ENCODE measurements at regions of chr14 and their contacts with region 1.

Region 1: DNA sequence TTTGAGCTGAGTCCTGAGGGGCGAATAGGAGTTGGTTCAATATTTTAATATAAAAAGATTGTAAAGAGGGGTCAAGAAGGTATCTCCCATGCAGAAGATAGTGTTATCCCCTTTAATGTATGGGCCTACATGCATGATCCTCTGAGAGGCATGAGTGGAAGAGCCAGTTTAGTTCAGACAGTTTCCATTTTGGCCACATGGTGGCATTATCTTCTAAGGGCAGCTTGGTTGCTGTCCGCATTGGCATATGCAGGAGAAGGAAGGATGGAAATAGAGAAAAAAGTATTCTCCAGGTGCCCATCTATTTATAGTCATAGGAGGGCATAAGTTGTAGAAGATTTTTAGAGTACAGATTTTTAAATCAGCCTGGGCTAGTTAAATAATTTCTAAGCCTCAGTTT is 5.4 kb downstream of the SAMD4A start:
- DNase-seq: peak in 3 of 4 experiments; percentile 29 to 46 (median 41)
- ATAC-seq: 0 out of 3 replicates have a peak, but pooled peaks have one; percentile 11
- H3K4me3 ChIP-seq: no peak overlapping the region
- H3K27ac ChIP-seq: no peak overlapping the region
- H3K4me1 ChIP-seq: peaks cover 12 to 13% of the 10 kb centered on the region in 2 experiments; a peak in 4 of 5 replicates
- H3K27me3 ChIP-seq: no peaks in the 10 kb centered on the region
- CTCF ChIP-seq: peak; percentile 57 to 60 (median 57); a peak in 5 of 6 replicates
- EP300 ChIP-seq: no peak
- POLR2A ChIP-seq: no peak
- RAD21 ChIP-seq: peak; percentile 17 to 68; a peak in 3 of 4 replicates

Region 2: DNA sequence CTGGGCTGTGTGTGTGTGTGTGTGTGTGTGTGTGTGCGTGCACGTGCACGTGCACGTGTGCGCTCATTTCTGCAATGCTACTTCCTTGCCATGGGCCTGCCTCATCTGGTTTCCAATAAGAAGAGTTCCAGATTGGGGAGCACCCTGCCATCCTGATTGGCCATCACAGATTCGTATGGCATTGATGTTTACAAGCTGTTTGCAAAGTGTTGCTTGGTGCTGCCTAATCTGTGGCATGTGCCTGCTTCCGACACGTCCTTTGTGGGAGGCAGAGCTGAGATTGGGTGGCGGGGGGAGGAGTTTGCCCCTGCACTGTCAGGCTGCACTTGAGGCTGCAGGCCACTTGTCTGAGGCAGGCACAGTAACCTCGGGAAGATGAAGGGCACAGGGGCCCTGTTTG is 33.9 kb after region 1 on chr14:
- CTCF ChIA-PET with region 1: no interaction called
- POLR2A ChIA-PET with region 1: no interaction called
- in situ Hi-C with region 1: no loop called
- intact Hi-C with region 1: no loop called
- DNase-seq: no peak
- ATAC-seq: no peak
- H3K4me3 ChIP-seq: no peak overlapping the region
- H3K27ac ChIP-seq: no peak overlapping the region
- H3K4me1 ChIP-seq: no peaks in the 10 kb centered on the region; a peak in 1 of 5 replicates
- H3K27me3 ChIP-seq: no peaks in the 10 kb centered on the region
- CTCF ChIP-seq: no peak
- EP300 ChIP-seq: no peak
- POLR2A ChIP-seq: no peak
- RAD21 ChIP-seq: no peak

Region 3: DNA sequence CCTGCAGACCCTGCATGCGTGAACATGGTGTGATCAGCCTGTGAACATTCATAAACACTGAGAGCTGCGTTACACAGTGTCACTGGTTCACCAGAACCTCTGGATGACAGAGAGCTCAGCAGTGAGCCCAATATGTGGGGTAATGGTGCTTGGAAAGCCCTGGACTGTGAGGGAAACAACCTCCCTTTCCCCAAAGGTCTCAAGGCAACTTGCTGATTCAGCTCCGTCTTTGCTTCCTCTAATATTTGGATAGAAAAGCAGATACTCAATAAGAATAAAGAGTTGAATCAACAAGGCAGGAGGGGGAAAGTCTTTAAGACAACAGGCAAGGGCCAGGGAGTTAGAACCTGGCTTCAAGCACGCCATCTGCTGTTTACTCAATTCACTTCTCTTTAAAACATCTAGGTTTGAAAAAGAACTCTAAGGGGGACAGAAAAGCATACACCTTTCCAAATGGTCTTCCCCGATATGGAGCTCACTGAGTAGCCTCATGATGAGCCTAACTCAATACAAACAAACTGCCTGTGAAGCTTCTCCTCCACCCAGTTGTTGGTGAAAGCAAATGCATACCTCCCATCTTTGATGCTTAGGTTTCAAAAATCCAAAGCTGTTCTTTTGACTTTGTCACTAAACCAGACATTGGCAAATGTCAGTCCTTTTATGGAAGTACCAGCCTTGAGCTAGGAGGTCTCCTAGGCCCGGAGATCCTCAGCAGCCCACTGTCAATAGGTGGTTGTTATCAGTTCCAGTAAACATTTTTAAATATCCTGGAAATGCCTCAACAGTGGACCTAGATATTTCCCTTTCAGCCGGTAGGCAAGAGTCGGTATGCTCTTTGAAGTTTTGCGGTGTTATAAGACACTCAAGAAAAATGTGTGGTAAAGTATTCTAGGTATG is 70.7 kb after region 1 on chr14:
- CTCF ChIA-PET with region 1: no interaction called
- POLR2A ChIA-PET with region 1: no interaction called
- in situ Hi-C with region 1: no loop called
- intact Hi-C with region 1: loop called (anchors 1 kb)
- DNase-seq: peak in 1 of 4 experiments; percentile 27
- ATAC-seq: peak; percentile 72
- H3K4me3 ChIP-seq: no peak overlapping the region
- H3K27ac ChIP-seq: no peak overlapping the region
- H3K4me1 ChIP-seq: no peaks in the 10 kb centered on the region
- H3K27me3 ChIP-seq: no peaks in the 10 kb centered on the region
- CTCF ChIP-seq: peak in 2 of 3 experiments; percentile 34 to 46; a peak in 2 of 6 replicates
- EP300 ChIP-seq: no peak
- POLR2A ChIP-seq: no peak
- RAD21 ChIP-seq: peak; percentile 28 to 49; a peak in 3 of 4 replicates

Region 4: GRCh38 chr14:54734966-54735365 is 162.7 kb after region 1 on chr14:
- CTCF ChIA-PET with region 1: no interaction called
- POLR2A ChIA-PET with region 1: no interaction called
- in situ Hi-C with region 1: no loop called
- intact Hi-C with region 1: no loop called
- DNase-seq: no peak
- ATAC-seq: no peak
- H3K4me3 ChIP-seq: no peak overlapping the region
- H3K27ac ChIP-seq: no peak overlapping the region
- H3K4me1 ChIP-seq: peaks cover 0 to 26% of the 10 kb centered on the region in 2 experiments; a peak in 4 of 5 replicates
- H3K27me3 ChIP-seq: no peaks in the 10 kb centered on the region
- CTCF ChIP-seq: no peak
- EP300 ChIP-seq: no peak
- POLR2A ChIP-seq: no peak
- RAD21 ChIP-seq: no peak

Measured in K562 (cell line).